A549 (cell line): ENCODE measurements at regions of chr11 and their contacts with region 1.

Region 1: DNA sequence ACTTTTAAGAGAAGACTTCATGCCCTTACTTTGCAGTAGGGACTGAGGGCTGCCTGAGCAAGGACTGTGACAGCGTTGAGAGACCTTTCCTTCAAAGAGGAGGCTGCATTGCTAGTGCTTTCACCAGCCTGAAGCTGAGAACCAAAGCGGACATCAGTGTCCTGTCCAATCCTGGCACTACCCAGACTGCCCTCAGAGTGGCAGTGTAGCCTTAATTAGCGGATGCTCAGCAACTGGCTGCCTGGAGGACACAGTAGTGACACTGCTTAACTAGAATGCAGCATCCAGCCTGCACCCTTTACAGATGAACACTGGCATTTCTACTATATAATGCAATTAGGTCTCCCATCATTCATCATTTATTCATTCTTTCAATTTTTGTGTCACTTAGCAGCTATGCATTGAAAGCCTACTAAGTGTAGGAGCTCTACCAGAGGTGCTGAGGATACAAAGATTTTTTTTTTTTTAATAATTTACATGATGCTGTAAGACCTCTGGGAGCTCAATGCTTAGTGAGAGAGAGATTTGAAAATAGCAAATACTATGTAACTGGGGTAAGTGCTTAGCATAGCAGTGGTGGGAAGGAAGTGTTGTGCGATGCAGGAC is 36.9 kb upstream of the SLC36A4 start:
- DNase-seq: peak; percentile 41 to 71
- ATAC-seq: peak; percentile 97 to 99
- H3K4me3 ChIP-seq: no peak overlapping the region
- H3K27ac ChIP-seq: no peak overlapping the region
- H3K4me1 ChIP-seq: no peaks in the 10 kb centered on the region
- CTCF ChIP-seq: peak; percentile 74
- EP300 ChIP-seq: no peak
- POLR2A ChIP-seq: no peak
- RAD21 ChIP-seq: peak; percentile 87 to 90

Region 2: GRCh38 chr11:93166194-93166593 is 68.5 kb before region 1 on chr11:
- CTCF ChIA-PET with region 1: no interaction called
- POLR2A ChIA-PET with region 1: no interaction called
- DNase-seq: no peak
- ATAC-seq: no peak
- H3K4me3 ChIP-seq: no peak overlapping the region
- H3K27ac ChIP-seq: no peak overlapping the region
- H3K4me1 ChIP-seq: no peaks in the 10 kb centered on the region
- CTCF ChIP-seq: no peak
- EP300 ChIP-seq: no peak
- POLR2A ChIP-seq: no peak
- RAD21 ChIP-seq: no peak

Region 3: DNA sequence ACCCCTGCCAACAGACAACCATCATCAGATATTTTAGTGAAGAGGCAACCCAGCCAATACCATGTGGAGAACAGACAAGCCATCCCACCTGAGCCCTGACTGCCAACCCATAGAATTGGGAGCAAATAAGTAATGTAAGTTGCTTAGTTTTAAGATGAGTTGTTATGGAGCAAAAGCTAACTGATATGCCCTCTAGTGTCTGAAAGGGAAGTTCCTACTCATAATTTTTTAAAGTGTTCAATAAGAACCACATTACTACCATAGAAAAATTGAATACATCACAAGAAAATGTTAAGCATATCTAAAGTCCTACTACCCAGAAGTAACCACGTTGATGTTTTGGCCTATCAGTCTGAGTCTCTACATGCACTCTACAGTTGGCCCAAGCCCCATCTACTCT is 13.9 kb after region 1 on chr11:
- CTCF ChIA-PET with region 1: interaction called, 14 read pairs
- POLR2A ChIA-PET with region 1: no interaction called
- DNase-seq: no peak
- ATAC-seq: no peak
- H3K4me3 ChIP-seq: no peak overlapping the region
- H3K27ac ChIP-seq: no peak overlapping the region
- H3K4me1 ChIP-seq: no peaks in the 10 kb centered on the region
- CTCF ChIP-seq: no peak
- EP300 ChIP-seq: no peak
- POLR2A ChIP-seq: no peak
- RAD21 ChIP-seq: no peak

Region 4: DNA sequence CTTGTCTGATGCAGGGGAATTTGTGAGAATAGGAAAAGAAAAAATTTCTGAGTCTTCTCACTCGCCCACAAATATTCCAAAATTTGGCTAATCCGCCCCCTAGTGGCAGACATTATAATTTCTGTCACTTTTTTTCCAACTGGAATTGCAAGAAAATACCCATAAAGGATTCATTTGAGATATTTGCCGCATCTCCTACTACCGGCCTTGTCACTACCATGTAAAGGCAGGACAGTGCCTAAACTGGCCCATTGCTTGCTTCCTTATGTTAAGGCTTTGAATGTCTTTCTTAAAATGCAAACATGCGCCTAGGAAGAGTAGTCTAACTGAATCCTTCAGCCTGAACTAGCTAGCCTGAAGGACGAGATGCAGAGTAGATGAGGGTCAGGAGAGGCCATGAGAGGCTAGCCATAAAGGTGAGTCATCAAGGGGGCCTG is 417.5 kb after region 1 on chr11:
- CTCF ChIA-PET with region 1: interaction called, 86 read pairs
- POLR2A ChIA-PET with region 1: no interaction called
- DNase-seq: peak in 1 of 2 experiments; percentile 38
- ATAC-seq: peak in 1 of 2 experiments; percentile 50; a peak in 3 of 6 replicates
- H3K4me3 ChIP-seq: no peak overlapping the region
- H3K27ac ChIP-seq: no peak overlapping the region
- H3K4me1 ChIP-seq: 0 out of 3 replicates have a peak, but pooled peaks cover 3% of the 10 kb centered on the region
- CTCF ChIP-seq: peak; percentile 72
- EP300 ChIP-seq: no peak
- POLR2A ChIP-seq: no peak
- RAD21 ChIP-seq: peak; percentile 63 to 69

Region 5: DNA sequence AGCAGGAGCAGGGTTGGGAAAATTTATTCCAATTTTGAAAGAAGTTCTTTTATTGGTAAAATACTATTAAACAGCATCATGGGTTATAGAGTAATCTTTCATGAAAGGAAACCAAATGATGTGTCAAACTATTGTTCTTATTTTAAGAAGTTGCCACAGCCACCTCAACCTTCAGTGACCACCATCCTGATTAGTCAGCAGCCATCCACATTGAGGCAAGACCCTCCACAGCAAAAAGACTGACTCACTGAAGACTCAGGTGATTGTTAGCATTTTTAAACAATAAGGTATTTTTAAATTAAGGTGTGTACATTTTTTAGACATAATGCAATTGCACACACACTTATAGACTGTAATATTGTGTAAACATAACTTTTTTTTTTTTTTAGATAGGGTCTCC is 782.7 kb after region 1 on chr11:
- CTCF ChIA-PET with region 1: no interaction called
- POLR2A ChIA-PET with region 1: no interaction called
- DNase-seq: no peak
- ATAC-seq: no peak
- H3K4me3 ChIP-seq: no peak overlapping the region
- H3K27ac ChIP-seq: no peak overlapping the region
- H3K4me1 ChIP-seq: no peaks in the 10 kb centered on the region
- CTCF ChIP-seq: no peak
- EP300 ChIP-seq: no peak
- POLR2A ChIP-seq: no peak
- RAD21 ChIP-seq: no peak